Posterior vena cava (tissue), 2 donors: ENCODE measurements at regions of chr3 and their contacts with region 1.

Region 1: DNA sequence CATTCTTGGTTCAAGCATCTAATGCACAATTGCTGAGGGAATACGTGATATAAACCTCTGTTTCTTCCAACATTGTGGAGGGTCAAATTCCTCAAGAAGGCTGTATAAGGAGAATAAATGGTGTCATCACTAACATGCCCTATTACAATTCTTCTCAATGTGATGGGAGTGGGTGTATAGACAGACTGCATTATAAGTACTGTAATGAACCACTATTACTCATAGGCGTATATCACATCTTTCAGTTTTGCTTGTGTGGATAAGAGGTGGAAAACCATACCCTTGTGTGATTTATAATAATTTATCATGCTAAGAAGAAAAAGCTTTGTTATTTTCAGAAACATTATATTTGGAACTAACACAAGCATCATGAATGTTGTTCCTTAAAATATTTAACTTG is 35.3 kb upstream of the BBX start:
- DNase-seq: no peak

Region 2: GRCh38 chr3:107524841-107525643 is 37.6 kb after region 1 on chr3:
- intact Hi-C with region 1: loop called in 1 of 2 experiments (anchors 1 kb)
- DNase-seq: peak; percentile 87

Region 3: GRCh38 chr3:107542665-107543064 is 55.2 kb after region 1 on chr3:
- intact Hi-C with region 1: no loop called
- DNase-seq: no peak